ENCODE measurements at regions of chr7 and their contacts with region 1.

Region 1: DNA sequence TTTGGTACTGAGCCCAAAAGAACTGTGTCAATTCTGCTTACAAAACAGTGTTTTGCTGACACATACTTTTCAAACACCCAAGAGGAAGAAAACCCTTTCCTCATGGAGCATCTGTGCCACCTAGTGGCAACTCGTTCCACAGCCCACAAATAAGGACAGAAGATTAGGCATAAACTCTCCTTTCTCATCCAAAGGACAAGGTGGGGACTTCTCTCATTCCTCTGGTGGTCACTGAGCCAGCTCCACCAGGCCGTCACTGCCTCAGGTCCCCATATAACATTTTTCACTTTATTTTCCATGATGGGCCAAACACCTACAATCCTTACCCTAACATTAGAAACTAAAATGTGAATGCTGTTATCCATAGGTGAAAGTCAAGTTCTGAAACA is 76.9 kb downstream of the RNF216 start:
- DNase-seq: peak; percentile 90
- H3K4me3 ChIP-seq: no peak overlapping the region
- H3K27ac ChIP-seq: peak overlapping the region; percentile 93 to 99 (median 94)
- H3K4me1 ChIP-seq: peaks cover 0 to 63% (median 48%) of the 10 kb centered on the region in 4 donors
- H3K27me3 ChIP-seq: no peaks in the 10 kb centered on the region
- CTCF ChIP-seq: peak; percentile 86 to 97 (median 91)
- EP300 ChIP-seq: no peak
- POLR2A ChIP-seq: no peak

Region 2: DNA sequence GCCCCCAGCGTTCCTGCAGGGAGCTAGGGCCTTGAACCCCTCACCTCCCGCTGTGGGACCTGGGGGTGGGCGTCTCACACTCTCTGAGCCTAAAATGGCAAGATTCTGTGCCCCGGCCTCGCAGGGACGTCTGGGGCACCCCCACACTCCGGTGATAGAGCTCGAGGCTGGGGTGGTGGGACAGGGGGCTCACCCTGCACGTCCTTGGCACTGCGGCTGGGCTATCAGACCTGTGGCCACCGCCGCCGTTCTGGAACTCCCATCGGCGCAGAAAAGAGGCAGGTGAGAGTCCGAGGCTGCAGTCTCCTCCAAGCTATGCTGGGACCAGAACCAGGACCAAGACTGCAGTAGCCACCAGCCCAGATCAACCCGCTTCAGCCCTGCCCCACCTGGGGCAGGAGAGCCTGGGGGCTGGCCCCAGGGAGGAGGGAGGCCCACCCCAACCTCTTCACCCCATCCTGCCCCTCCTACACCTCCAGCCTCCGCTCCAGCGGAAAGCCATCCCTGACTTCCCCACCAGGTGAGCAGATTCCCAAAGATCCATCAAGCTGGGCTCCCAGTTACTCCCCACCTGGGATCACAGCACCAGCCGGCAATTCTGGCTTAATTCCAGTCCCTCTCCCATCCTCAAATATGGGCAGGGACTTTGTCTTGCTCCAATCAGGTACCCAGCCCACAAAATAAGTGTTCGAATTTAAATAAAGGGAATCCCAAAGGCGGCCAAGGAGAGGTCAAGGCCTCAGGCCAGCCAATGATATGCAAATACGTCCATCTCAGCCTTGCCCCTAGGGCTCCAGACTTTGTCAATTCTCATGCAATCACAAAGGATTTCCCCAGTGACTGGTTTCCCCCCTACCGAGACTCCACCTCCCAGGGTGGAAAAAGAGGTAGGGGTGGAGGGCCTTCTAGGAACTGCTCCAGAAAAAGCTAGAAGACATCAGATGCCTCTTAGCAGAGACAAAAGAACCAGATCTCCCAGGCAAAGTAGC is 297.3 kb before region 1 on chr7:
- intact Hi-C with region 1: no loop called
- DNase-seq: no peak
- H3K4me3 ChIP-seq: no peak overlapping the region
- H3K27ac ChIP-seq: peak overlapping the region; percentile 50 to 100 (median 62)
- H3K4me1 ChIP-seq: peaks cover 0 to 65% (median 58%) of the 10 kb centered on the region in 4 donors
- H3K27me3 ChIP-seq: no peaks in the 10 kb centered on the region
- CTCF ChIP-seq: no peak
- EP300 ChIP-seq: no peak
- POLR2A ChIP-seq: no peak

Region 3: DNA sequence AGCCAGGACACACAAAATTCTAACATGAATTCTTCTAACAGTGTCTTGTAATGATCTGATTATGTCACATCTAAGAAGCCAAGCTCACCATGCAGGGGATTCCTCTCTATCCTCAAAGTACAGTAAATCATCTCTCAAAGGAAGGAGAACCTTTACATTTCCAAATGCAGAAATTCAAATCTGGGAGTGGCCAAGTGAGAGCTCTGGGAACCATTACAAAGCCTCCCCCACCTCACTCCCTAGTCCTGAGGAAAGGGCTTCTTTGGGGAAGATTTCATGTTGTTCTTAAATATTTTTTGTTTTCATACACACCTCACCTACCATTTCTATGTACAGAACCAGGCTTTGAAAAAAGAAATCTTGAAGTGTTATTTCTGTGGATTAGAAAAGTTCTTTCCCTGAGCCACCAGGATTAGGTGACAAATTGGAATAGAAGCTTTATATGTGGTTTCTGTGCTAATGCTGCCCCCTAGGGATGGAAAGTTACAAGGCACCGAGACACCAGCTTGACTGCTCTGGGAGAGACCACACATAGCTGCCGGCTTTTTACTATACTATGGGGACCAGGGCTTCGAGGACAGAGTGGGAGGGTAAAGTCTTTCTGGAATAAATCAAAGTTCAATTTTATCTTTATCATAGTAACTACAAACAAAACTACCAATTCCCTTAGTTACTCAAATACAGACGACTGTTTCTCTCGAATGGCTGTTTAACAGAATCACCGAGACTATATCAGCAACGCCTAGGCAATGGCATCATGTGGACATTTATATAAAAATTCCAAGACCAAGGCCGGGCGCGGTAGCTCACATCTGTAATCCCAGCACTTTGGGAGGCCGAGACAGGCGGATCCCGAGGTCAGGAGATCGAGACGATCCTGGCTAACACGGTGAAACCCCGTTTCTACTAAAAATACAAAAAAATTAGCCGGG is 39.2 kb before region 1 on chr7:
- intact Hi-C with region 1: loop called (anchors 2 kb)
- DNase-seq: peak; percentile 87
- H3K4me3 ChIP-seq: no peak overlapping the region
- H3K27ac ChIP-seq: peak overlapping the region; percentile 17 to 99 (median 75)
- H3K4me1 ChIP-seq: peaks cover 0 to 62% (median 40%) of the 10 kb centered on the region in 4 donors
- H3K27me3 ChIP-seq: no peaks in the 10 kb centered on the region
- CTCF ChIP-seq: peak; percentile 79 to 94 (median 82)
- EP300 ChIP-seq: no peak
- POLR2A ChIP-seq: no peak

Region 4: DNA sequence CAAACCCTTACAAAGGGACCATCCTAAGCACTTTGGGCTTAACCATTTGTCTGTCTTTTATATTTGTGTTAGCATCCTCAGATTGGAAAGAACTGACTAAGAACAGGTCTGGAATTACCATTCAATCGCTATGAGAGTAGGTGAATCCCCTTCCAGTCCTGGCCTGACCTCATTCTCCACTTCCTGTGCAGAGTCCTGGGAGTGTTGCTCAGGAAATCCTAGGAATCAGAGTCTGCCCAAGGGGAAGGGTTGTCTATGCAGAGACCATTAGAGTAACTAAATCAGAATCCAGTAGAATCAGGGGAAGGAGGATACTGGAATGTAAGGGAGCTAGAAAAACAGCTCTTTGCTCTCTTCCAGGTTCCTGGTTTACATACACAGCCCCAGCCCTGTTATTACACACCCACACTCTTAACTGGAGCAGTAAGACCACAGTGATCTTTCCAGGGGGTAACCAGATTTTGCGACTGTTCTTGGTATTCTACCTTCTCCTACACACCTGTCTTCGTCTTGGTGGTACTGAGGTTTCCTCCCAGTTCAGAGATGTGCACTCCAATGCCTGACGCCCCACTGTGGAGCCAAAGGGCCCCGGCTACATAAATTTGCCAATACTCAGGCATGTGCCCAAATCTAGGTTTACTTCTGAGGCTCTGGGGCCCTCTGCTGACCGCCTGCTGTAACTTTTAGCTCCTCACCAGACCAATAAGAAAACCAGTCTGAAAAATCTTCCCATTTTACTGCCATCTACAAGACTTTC is 26.8 kb before region 1 on chr7:
- intact Hi-C with region 1: loop called (anchors 1 kb)
- DNase-seq: peak; percentile 88
- H3K4me3 ChIP-seq: no peak overlapping the region
- H3K27ac ChIP-seq: peak overlapping the region; percentile 73 to 99 (median 86)
- H3K4me1 ChIP-seq: peaks cover 0 to 83% (median 76%) of the 10 kb centered on the region in 4 donors
- H3K27me3 ChIP-seq: no peaks in the 10 kb centered on the region
- CTCF ChIP-seq: peak in 3 of 4 experiments; percentile 66 to 75 (median 72)
- EP300 ChIP-seq: no peak
- POLR2A ChIP-seq: no peak

Region 5: DNA sequence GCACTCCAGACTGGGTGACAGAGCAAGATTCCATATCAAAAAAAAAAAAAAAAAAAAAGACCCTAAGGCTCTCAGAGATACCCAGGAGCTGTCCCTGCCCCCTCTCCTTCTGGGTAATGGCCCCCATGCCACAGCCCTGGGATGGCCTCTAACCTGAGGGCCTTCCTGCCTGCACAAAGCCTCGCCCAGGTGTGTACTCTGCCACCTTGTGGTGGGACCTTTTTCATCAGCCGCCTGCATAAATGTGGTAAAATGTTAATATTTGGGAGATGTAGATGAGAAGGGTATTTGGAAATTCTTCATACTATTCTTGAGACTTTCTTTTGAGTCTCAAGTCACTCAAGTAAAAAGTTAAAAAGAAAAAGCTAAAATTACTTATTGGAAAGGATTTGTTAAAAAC is 123.2 kb after region 1 on chr7:
- intact Hi-C with region 1: no loop called
- DNase-seq: no peak
- H3K4me3 ChIP-seq: no peak overlapping the region
- H3K27ac ChIP-seq: no peak overlapping the region
- H3K4me1 ChIP-seq: peaks cover 0 to 11% (median 9%) of the 10 kb centered on the region in 4 donors
- H3K27me3 ChIP-seq: no peaks in the 10 kb centered on the region
- CTCF ChIP-seq: no peak
- EP300 ChIP-seq: no peak
- POLR2A ChIP-seq: no peak

Measured in sigmoid colon (tissue), 7 donors.